ENCODE measurements at regions of chr2 and their contacts with region 1.

Region 1: GRCh38 chr2:71510196-71510807 is 56.9 kb downstream of the DYSF start:
- DNase-seq: peak; percentile 87
- CTCF ChIP-seq: peak; percentile 82

Region 2: GRCh38 chr2:71049365-71050360 is 460.6 kb before region 1 on chr2:
- in situ Hi-C with region 1: loop called (anchors 25 kb)
- DNase-seq: peak; percentile 41
- CTCF ChIP-seq: peak; percentile 34

Region 3: DNA sequence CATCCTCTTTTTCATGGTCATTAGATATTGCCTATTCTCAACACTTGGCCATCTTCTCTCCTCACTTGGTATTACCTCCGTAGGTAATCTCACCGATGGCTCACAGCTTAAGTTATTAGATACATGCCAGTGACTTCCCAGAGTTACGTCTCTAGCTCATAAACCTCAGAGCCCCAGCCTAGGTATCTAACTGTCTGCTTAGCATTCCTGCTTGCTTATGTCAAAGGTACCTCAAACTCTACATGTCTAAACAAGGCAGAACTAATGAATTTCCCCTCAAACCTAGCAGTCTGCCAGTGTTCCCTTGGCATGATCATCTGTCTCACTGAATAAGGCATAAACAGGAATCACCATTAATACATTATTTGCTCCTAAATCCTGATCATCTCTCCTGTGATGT is 206.5 kb before region 1 on chr2:
- in situ Hi-C with region 1: loop called (anchors 5 kb)
- DNase-seq: no peak
- CTCF ChIP-seq: no peak

Region 4: DNA sequence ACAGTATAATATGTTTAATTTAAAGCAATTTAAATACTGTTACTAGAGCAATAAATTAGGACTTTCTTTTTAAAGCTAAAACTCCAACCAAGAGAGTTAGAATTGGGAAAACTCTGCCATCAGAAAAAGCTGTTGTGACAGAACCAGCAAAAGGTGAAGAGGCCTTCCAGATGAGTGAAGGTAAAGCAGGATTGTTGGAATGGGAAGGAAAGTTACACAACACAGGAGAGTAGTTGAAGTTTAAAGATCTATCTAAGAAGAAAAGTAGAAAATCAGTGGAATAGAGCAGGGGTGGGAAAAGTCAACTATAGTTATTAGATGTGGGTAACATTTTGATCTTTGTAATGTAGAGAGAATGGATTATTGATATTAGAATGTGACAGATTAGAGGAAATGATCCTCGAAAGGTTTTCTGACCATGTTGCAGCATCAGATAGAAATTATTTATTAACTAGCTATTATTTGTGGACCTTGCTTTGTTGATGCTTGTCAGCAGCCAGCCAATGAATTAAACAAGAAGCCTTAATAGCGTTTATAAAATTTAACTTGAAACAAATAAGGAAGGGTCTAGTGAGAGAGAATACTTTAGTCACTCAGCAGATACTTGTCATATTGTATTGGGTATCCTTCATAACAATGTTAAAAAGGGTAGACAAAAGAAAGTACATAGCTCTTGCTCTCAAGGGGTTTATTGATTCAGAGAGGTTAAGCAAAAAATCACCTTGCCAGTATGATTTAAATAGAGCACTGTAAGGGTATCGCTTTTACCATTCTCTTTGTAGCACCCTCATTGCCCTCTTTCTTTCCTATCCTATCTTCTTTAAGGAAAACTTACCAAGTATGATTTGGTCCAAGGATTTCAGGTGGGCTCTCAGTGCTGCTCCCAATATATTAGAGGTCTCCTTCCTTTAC is 81.6 kb before region 1 on chr2:
- in situ Hi-C with region 1: no loop called
- DNase-seq: no peak
- CTCF ChIP-seq: no peak

Region 5: DNA sequence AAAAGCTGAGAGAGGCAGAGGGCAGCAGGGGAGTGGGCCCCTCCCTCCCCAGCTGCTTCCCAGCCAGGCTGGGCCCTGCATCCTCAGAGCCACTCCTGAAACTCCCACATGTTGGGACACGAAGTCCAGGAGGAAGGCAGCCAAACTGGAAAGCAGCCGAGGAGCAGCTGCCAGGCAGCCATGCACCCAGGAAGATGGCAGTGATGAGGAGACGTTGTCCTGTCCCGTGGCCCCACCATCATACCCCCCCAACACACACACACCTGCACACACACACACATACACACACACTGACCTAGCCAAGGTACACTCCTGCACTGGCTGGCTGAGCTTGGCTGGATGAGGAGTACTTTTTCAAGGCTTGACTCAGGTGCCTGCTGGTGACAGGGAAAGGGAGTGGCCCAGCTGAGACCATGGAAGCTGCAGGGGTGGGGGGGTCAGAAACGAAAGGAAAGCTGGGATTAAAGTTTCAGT is 531.4 kb after region 1 on chr2:
- in situ Hi-C with region 1: no loop called
- DNase-seq: no peak
- CTCF ChIP-seq: no peak